Breast epithelium (tissue), 4 donors: ENCODE measurements at regions of chr9 and their contacts with region 1.

Region 1: DNA sequence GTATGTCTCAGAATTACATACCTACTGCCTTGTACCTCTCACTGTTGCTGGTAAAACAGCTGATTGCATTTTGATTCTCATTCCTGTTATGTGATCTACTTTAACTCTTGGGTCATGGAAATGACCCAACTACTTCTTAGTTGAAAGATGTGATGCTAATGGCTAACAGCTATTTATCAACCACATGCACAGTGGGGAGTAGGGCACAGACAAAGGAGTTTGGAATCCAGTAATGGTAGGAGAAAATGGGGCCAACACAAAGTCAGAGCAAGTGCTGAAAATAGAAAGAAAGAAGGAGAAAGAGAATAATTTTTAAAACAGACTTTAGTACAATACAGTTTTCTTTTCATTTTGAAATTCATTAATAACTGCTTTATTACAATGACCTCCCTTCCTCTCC is 241.0 kb downstream of the PTPRD start:
- DNase-seq: no peak
- H3K4me3 ChIP-seq: no peak overlapping the region
- H3K27ac ChIP-seq: no peak overlapping the region
- H3K4me1 ChIP-seq: no peaks in the 10 kb centered on the region
- H3K27me3 ChIP-seq: no peaks in the 10 kb centered on the region
- CTCF ChIP-seq: no peak
- POLR2A ChIP-seq: no peak

Region 2: GRCh38 chr9:10396615-10397014 is 24.8 kb after region 1 on chr9:
- intact Hi-C with region 1: loop called (anchors 2 kb)
- DNase-seq: no peak
- H3K4me3 ChIP-seq: no peak overlapping the region
- H3K27ac ChIP-seq: no peak overlapping the region
- H3K4me1 ChIP-seq: no peaks in the 10 kb centered on the region
- H3K27me3 ChIP-seq: no peaks in the 10 kb centered on the region
- CTCF ChIP-seq: no peak
- POLR2A ChIP-seq: no peak